ENCODE measurements at regions of chr5 and their contacts with region 1.

Region 1: DNA sequence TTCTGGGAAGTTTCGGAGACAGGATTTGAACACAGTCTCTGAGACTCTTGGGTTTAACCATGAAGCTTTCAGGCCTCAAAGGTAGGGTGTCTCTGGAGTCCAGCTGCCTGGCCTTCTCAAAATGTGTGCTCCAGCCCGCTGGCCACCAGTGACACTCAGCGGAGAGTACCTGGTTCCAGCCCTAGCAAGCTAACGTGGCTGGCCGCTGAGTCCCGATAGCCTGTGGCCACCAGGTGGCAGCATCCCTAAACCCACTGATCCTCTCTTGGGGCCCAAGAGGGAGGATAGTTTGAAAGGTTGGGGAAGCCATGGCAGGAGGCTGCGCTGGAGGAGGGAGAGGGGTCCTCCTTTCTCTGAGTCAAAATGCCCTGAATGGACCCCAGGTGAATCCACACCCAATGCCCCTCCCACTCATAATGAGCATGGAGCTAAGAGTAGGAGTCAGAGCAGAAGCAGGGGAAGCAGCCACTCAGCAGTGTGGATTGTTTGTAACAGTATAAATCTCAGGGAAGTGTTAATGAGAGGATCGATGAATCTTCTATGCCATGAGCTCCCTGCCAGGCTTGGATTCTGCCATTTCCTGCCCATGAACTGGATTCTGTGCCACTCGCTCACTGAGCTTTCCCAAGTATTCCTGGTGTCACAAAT is 5.4 kb upstream of the TIFAB start:
- DNase-seq: peak; percentile 50
- H3K4me3 ChIP-seq: no peak overlapping the region
- H3K27ac ChIP-seq: no peak overlapping the region
- H3K4me1 ChIP-seq: no peaks in the 10 kb centered on the region
- H3K27me3 ChIP-seq: peaks cover 17 to 22% of the 10 kb centered on the region in 2 experiments
- CTCF ChIP-seq: peak; percentile 90 to 91
- POLR2A ChIP-seq: no peak

Region 2: GRCh38 chr5:135289651-135290050 is 167.9 kb before region 1 on chr5:
- CTCF ChIA-PET with region 1: no interaction called
- POLR2A ChIA-PET with region 1: no interaction called
- dilution Hi-C with region 1: no loop called
- intact Hi-C with region 1: no loop called
- DNase-seq: no peak
- H3K4me3 ChIP-seq: no peak overlapping the region
- H3K27ac ChIP-seq: no peak overlapping the region
- H3K4me1 ChIP-seq: no peaks in the 10 kb centered on the region
- H3K27me3 ChIP-seq: peaks cover 5 to 32% of the 10 kb centered on the region in 2 experiments
- CTCF ChIP-seq: no peak
- POLR2A ChIP-seq: no peak

Region 3: DNA sequence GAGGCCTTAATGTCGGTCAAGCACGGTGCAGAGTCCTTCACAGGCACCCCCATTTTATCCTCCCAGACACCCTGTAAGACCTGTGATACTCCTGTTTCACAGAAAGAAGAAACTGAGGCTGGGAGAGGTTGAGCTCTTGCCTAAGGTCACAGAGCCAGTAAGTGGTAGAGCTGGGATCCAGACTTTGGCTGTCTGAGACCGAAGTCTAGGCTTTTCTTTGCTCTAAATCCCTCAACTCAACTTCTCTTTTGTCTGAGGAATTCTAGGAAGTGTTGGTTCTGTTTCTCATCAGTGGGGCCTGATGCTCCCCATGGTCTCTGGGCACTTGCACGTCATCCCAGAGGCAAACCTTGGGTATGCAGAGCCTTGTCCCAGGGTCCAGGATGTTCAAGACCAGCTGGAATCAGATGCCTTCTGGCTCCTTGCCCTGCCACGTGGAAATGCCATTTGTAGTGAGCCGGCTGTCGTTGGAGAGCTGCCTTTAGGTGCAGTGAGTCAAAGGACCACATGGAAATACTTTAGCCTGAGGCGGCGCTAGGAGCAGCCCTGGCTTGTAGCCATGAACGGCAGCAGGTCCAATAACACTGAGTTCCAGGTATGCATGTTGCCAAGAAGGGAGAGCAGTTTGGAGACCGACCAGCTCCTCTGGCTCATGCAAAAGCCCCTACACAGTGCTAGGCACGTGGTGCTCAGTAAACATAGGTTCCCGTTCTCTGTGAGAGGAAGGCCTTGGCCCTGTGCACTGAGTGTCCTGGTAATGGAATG is 19.6 kb before region 1 on chr5:
- CTCF ChIA-PET with region 1: interaction called, 15 read pairs
- POLR2A ChIA-PET with region 1: no interaction called
- dilution Hi-C with region 1: no loop called
- intact Hi-C with region 1: no loop called
- DNase-seq: no peak
- H3K4me3 ChIP-seq: no peak overlapping the region
- H3K27ac ChIP-seq: no peak overlapping the region
- H3K4me1 ChIP-seq: no peaks in the 10 kb centered on the region
- H3K27me3 ChIP-seq: peaks cover 5 to 25% of the 10 kb centered on the region in 2 experiments
- CTCF ChIP-seq: no peak
- POLR2A ChIP-seq: no peak

Region 4: GRCh38 chr5:135445306-135445985 is 12.1 kb before region 1 on chr5:
- CTCF ChIA-PET with region 1: interaction called, 26 read pairs
- POLR2A ChIA-PET with region 1: no interaction called
- dilution Hi-C with region 1: no loop called
- intact Hi-C with region 1: no loop called
- DNase-seq: no peak
- H3K4me3 ChIP-seq: no peak overlapping the region
- H3K27ac ChIP-seq: no peak overlapping the region
- H3K4me1 ChIP-seq: no peaks in the 10 kb centered on the region
- H3K27me3 ChIP-seq: peaks cover 2 to 5% of the 10 kb centered on the region in 2 experiments
- CTCF ChIP-seq: no peak
- POLR2A ChIP-seq: no peak

Region 5: DNA sequence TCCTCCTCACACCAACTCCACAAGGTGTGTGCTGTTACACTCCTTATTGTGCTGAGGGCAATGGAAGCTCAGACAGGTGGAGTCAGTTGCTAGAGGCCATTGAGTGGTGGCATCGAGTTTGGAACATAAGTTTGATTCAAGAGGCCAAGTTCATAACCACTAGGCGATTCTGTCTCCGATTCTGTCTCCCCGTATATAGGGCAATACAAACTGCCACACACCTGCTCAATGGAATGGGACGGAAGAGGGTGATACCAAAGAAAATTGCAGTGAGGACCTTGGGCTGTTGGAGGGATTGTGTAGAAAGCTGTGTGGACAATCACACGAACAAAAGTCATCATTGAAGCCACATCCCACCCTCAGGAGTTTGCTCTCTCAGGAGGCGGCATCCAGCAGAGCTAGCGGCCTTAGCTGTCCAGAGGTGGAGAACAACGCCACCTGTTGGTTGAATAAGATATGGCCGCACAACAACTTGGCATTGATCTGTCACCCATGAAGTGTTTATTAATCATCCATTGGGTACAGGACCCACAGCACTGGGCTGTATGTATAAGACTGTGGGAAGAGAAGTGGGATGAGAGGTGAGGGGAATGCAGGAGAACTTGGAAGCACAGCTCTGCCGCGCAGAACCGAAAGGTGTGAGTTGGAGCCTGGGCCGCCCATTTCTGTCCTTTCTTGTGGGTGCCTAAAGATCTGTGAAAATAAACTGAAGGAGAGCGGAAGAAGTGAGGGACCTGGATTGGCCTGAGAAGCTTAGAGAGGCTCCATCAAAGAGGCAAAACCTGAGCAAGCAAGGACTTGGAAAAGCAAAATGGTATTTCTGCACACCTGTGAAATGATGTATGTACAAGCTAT is 94.3 kb after region 1 on chr5:
- CTCF ChIA-PET with region 1: interaction called, 661 read pairs
- POLR2A ChIA-PET with region 1: interaction called, 3 read pairs
- dilution Hi-C with region 1: loop called (anchors 25 kb)
- intact Hi-C with region 1: loop called (anchors 1 kb)
- DNase-seq: peak; percentile 71
- H3K4me3 ChIP-seq: no peak overlapping the region
- H3K27ac ChIP-seq: no peak overlapping the region
- H3K4me1 ChIP-seq: no peaks in the 10 kb centered on the region
- H3K27me3 ChIP-seq: peaks cover 34 to 46% of the 10 kb centered on the region in 2 experiments
- CTCF ChIP-seq: peak; percentile 74 to 83
- POLR2A ChIP-seq: no peak